Transverse colon (tissue), 4 donors: ENCODE measurements at regions of chr6 and their contacts with region 1.

Region 1: GRCh38 chr6:10478187-10479040 is 42.7 kb upstream of the GCNT2 start:
- DNase-seq: no peak
- H3K4me3 ChIP-seq: no peak overlapping the region
- H3K27ac ChIP-seq: no peak overlapping the region
- H3K4me1 ChIP-seq: no peaks in the 10 kb centered on the region
- H3K27me3 ChIP-seq: no peaks in the 10 kb centered on the region
- CTCF ChIP-seq: peak; percentile 58 to 68 (median 63)
- EP300 ChIP-seq: no peak
- POLR2A ChIP-seq: no peak

Region 2: DNA sequence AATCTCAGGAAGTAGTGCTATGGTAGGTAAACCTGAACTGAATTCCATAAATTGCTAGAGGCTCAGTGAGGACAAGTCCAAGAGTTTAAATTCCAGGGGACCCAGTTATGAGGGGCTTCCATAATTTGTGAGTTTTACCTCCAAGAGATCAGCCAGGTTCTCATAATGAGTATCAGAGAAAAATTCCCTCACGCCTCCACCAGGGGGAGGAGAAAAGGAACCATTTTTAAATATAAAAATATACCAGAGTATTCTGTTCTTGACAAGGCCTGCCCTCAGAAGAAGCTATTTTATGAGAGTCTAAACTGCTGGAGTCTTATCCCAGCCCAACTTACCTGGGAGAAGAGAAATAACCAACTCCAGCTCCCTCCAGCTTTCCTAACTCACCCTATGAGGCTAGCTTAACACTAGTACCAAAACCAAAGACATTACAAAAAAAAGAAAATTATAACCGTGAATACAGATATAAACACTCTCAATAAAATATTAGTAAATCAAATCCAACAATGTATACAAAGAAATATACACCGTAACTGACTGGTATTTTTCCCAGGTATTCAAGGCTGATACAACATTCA is 222.2 kb before region 1 on chr6:
- in situ Hi-C with region 1: no loop called
- intact Hi-C with region 1: no loop called
- DNase-seq: no peak
- H3K4me3 ChIP-seq: no peak overlapping the region
- H3K27ac ChIP-seq: no peak overlapping the region
- H3K4me1 ChIP-seq: no peaks in the 10 kb centered on the region
- H3K27me3 ChIP-seq: no peaks in the 10 kb centered on the region
- CTCF ChIP-seq: peak; percentile 19 to 49 (median 31)
- EP300 ChIP-seq: no peak
- POLR2A ChIP-seq: no peak

Region 3: DNA sequence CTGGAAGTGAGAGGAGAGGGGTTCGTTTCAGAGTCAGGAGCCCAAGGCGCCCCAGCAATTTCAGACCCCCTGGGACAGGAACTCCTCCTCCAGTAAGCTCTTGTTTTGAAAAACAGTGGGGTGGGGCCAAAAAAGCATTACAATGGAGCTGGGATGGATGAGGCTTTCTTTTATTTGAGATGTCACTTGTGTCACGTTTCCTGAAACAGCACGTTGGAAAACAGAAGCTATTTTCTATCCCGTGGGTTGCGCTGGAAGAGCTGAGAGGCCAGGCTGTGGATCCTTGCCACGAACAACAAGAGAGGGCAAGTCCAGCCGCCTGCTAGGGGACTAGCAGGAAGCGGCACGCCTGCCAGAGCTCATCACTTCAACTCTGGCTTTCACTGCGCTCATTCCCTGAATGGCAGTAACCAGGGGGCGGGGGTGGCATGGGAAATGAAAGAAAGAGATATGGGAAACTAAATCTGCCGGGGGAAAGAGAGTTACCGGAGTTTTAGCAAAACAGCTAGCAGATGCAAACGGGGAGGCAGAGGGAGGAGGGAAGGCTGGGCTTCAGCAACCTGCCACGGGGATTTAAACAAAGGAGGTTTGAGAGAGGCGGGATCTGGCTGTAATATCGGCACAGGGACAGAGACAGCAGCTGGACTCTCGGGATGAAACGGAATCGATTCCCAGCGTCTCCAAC is 77.4 kb after region 1 on chr6:
- in situ Hi-C with region 1: no loop called
- intact Hi-C with region 1: no loop called
- DNase-seq: peak; percentile 59
- H3K4me3 ChIP-seq: peak overlapping the region; percentile 15 to 47 (median 22)
- H3K27ac ChIP-seq: peak overlapping the region; percentile 76 to 83 (median 77)
- H3K4me1 ChIP-seq: peaks cover 16 to 74% (median 37%) of the 10 kb centered on the region in 4 donors
- H3K27me3 ChIP-seq: no peaks in the 10 kb centered on the region
- CTCF ChIP-seq: no peak
- EP300 ChIP-seq: no peak
- POLR2A ChIP-seq: peak; percentile 13

Region 4: GRCh38 chr6:10793695-10794094 is 315.3 kb after region 1 on chr6:
- in situ Hi-C with region 1: loop called in 3 of 4 experiments (anchors 10 to 25 kb)
- intact Hi-C with region 1: no loop called
- DNase-seq: no peak
- H3K4me3 ChIP-seq: no peak overlapping the region
- H3K27ac ChIP-seq: no peak overlapping the region
- H3K4me1 ChIP-seq: no peaks in the 10 kb centered on the region
- H3K27me3 ChIP-seq: no peaks in the 10 kb centered on the region
- CTCF ChIP-seq: no peak
- EP300 ChIP-seq: no peak
- POLR2A ChIP-seq: no peak

Region 5: DNA sequence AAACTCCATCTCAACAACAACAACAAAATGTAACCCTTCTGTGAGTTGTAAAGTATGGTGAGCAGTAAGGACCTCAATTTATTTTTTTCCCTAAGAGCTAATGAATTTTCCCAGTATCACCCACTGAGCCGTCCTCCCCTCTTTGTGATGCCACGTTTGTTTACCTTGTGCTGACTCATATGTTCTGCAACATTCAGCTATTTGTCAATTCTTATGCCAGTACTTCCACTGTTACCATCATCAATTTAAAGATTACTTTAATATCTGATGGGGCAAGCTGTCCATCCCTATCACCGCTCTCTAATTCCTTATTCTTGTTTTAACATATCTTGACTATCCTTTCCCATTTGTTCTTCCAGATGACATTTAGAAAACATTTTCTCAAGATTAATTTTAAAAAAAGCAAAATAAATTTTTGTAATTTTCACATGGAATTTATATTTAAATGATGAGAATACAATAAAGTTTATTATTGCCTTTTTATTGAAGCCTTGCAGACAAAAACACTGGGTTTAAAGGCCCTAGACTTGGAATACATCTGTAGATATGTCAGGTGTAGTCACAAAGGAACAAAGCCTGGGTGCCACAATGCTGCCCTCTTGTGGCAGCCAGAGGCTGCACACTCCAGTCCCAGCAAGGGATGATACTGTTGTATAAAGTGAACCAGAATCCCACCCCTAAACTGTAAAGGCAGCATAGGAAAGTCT is 322.6 kb after region 1 on chr6:
- in situ Hi-C with region 1: loop called (anchors 10 to 25 kb)
- intact Hi-C with region 1: loop called (anchors 10 kb)
- DNase-seq: peak; percentile 51
- H3K4me3 ChIP-seq: no peak overlapping the region
- H3K27ac ChIP-seq: no peak overlapping the region
- H3K4me1 ChIP-seq: no peaks in the 10 kb centered on the region
- H3K27me3 ChIP-seq: no peaks in the 10 kb centered on the region
- CTCF ChIP-seq: peak; percentile 86 to 99 (median 97)
- EP300 ChIP-seq: no peak
- POLR2A ChIP-seq: no peak

Region 6: GRCh38 chr6:11050731-11051130 is 572.3 kb after region 1 on chr6:
- in situ Hi-C with region 1: loop called (anchors 25 kb)
- intact Hi-C with region 1: no loop called
- DNase-seq: no peak
- H3K4me3 ChIP-seq: no peak overlapping the region
- H3K27ac ChIP-seq: no peak overlapping the region
- H3K4me1 ChIP-seq: no peaks in the 10 kb centered on the region
- H3K27me3 ChIP-seq: peaks cover 52% of the 10 kb centered on the region
- CTCF ChIP-seq: no peak
- EP300 ChIP-seq: no peak
- POLR2A ChIP-seq: no peak